HCT116 (cell line): ENCODE measurements at regions of chr11 and their contacts with region 1.

Region 1: DNA sequence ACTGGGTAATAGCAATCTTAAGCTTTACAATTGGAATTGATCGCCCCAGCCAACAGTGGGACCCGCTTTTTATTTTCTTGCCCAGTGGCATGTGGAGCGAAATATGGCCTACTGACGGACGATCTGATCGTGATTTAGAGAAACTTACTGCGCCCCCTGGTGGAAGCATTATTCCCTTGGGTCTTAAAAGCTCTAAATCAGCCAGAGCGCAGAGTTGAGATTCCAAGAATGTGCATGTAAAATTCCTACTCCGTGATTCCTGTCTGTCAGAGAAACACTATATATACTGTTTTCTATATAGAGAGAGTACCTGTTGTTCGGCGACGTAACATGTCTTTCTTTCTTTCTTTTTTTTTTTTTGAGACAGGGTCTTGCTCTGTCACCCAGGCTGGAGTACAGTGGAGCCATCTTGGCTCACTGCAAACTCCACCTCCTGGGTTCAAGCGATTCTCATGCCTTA is 3.7 kb upstream of the DPF2 start:
- DNase-seq: peak; percentile 93
- ATAC-seq: peak; percentile 57
- H3K4me3 ChIP-seq: 0 out of 4 replicates have a peak overlapping the region, but pooled peaks of 1 of the 2 experiments have one; percentile 6
- H3K27ac ChIP-seq: no peak overlapping the region
- H3K4me1 ChIP-seq: peaks cover 9 to 23% of the 10 kb centered on the region in 2 experiments
- H3K27me3 ChIP-seq: no peaks in the 10 kb centered on the region
- CTCF ChIP-seq: peak; percentile 76 to 89 (median 86)
- POLR2A ChIP-seq: peak; percentile 15
- RAD21 ChIP-seq: peak; percentile 80

Region 2: GRCh38 chr11:65102142-65103095 is 227.6 kb before region 1 on chr11:
- CTCF ChIA-PET with region 1: no interaction called
- POLR2A ChIA-PET with region 1: no interaction called
- RAD21 ChIA-PET with region 1: no interaction called
- intact Hi-C with region 1: no loop called
- DNase-seq: no peak
- ATAC-seq: no peak; the same call in 1 of the 2 replicates
- H3K4me3 ChIP-seq: no peak overlapping the region
- H3K27ac ChIP-seq: no peak overlapping the region
- H3K4me1 ChIP-seq: peaks cover 0 to under 1% of the 10 kb centered on the region in 2 experiments; a peak in 1 of 4 replicates
- H3K27me3 ChIP-seq: no peaks in the 10 kb centered on the region
- CTCF ChIP-seq: no peak
- POLR2A ChIP-seq: no peak
- RAD21 ChIP-seq: no peak

Region 3: DNA sequence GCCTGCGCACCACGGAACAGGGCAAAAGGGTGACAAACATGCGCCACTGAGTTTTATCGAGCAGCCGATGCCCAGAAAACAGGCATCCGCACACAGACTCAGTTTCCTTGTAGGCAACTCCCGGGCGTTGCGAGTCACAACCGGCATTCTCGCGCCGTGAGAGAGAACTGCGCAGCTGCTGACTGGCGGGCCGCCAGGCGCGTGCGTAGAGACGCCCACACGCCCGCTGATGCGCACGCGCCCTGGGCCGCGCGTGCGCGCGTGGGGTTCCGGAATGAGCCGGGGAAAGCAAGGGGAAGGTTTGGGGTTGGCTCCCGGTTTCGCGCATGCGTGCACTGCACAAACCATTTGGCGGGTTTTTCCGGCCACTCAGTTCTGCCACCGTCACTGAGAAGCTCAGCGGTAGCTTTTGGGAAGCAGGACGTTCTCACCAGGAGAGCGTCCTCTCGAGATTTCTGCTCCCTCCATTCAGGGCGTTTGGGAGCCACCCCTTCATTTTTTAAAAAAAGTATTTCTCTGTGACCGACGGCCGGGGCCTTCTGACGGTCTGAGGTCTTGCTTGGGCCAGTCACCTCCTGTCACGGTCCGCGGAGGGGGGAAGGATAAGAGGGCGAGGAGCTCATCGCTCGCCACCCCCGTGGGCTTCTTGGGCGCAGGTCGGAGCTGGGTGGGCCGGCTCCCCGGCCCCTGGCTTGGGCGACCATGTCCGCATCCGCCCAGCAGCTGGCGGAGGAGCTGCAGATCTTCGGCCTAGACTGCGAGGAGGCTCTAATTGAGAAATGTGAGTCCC is 68.2 kb before region 1 on chr11 and contains the start of gene POLA2:
- CTCF ChIA-PET with region 1: interaction called, 4 read pairs
- POLR2A ChIA-PET with region 1: interaction called, 10 read pairs
- RAD21 ChIA-PET with region 1: interaction called in 1 of 2 experiments, 5 read pairs
- intact Hi-C with region 1: no loop called
- DNase-seq: peak; percentile 92
- ATAC-seq: peak; percentile 87
- H3K4me3 ChIP-seq: peak within 1 kb of the TSS; percentile 81 to 90
- H3K27ac ChIP-seq: peak within 1 kb of the TSS; percentile 90
- H3K4me1 ChIP-seq: peaks cover 7 to 18% of the 10 kb centered on the region in 2 experiments; a peak in 3 of 4 replicates
- H3K27me3 ChIP-seq: no peaks in the 10 kb centered on the region
- CTCF ChIP-seq: no peak
- POLR2A ChIP-seq: peak; percentile 62
- RAD21 ChIP-seq: no peak
- total RNA-seq, gene POLA2: 20.0 TPM

Region 4: DNA sequence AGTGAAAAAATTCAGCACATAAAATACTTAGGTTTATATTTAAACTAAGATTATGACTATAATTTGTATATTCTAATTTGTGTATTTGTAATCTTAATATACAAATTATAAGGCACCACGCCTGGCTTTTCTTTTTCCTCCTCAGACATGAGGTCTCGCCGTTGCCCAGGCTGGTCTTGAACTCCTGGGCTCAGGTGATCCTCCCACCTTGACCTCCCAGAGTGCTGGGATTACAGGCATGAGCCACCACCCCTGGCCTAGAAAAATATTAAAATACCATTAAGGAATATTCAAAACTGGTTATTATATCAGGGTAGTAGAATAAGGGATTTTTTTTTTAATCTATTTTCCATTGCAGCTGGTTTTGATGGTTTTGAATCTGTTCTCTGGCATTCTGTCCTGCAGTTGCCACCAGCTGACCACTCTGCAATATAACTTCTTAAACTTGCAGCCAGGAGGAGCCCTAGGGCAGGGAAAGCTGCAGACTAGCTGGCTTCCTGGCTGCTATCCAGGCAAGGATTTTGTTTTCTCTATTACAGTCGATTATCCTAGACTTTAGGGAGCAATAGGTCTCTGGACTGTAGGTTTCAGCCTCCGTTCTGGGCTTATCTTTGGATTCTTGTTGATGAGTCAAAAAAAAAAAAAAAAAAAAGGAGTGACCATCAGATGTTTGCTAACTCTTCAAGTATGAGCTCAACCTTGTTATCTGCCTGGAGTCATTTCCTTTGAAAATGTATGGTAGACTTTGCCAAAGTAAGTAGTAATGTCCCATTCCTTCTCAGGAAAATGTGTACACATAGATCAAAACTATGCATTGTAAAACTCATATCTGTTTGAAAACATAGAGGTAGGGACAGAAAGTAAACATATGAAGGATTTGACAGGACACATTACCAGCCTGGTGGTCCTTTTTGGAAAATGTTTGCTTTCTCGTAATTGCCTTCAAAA is 55.0 kb before region 1 on chr11:
- CTCF ChIA-PET with region 1: interaction called, 202 read pairs
- POLR2A ChIA-PET with region 1: interaction called, 16 read pairs
- RAD21 ChIA-PET with region 1: interaction called, 3 to 13 read pairs
- intact Hi-C with region 1: loop called (anchors 1 kb)
- DNase-seq: peak; percentile 68
- ATAC-seq: peak; percentile 71
- H3K4me3 ChIP-seq: no peak overlapping the region
- H3K27ac ChIP-seq: no peak overlapping the region
- H3K4me1 ChIP-seq: peaks cover 20 to 38% of the 10 kb centered on the region in 2 experiments
- H3K27me3 ChIP-seq: no peaks in the 10 kb centered on the region
- CTCF ChIP-seq: peak; percentile 67 to 97 (median 82); a peak in 5 of 6 replicates
- POLR2A ChIP-seq: no peak
- RAD21 ChIP-seq: peak; percentile 99

Region 5: GRCh38 chr11:65314501-65315203 is 15.3 kb before region 1 on chr11 and contains the start of gene CDC42EP2:
- CTCF ChIA-PET with region 1: interaction called, 103 read pairs
- POLR2A ChIA-PET with region 1: interaction called, 20 read pairs
- RAD21 ChIA-PET with region 1: interaction called, 3 read pairs
- intact Hi-C with region 1: no loop called
- DNase-seq: peak; percentile 44
- ATAC-seq: peak; percentile 82
- H3K4me3 ChIP-seq: peak within 1 kb of the TSS; percentile 84 to 85
- H3K27ac ChIP-seq: peak within 1 kb of the TSS; percentile 83
- H3K4me1 ChIP-seq: peaks cover 31 to 61% of the 10 kb centered on the region in 2 experiments
- H3K27me3 ChIP-seq: no peaks in the 10 kb centered on the region
- CTCF ChIP-seq: no peak
- POLR2A ChIP-seq: peak; percentile 62
- RAD21 ChIP-seq: no peak
- total RNA-seq, gene CDC42EP2: 15.4 TPM

Region 6: GRCh38 chr11:65354265-65355012 is 24.5 kb after region 1 on chr11 and contains the start of gene TIGD3:
- CTCF ChIA-PET with region 1: interaction called, 17 read pairs
- POLR2A ChIA-PET with region 1: interaction called, 3 read pairs
- RAD21 ChIA-PET with region 1: no interaction called
- intact Hi-C with region 1: no loop called
- DNase-seq: peak; percentile 81
- ATAC-seq: peak; percentile 96
- H3K4me3 ChIP-seq: peak within 1 kb of the TSS; percentile 44 to 60
- H3K27ac ChIP-seq: peak within 1 kb of the TSS; percentile 63
- H3K4me1 ChIP-seq: peaks cover 3 to 20% of the 10 kb centered on the region in 2 experiments; a peak in 2 of 4 replicates
- H3K27me3 ChIP-seq: no peaks in the 10 kb centered on the region
- CTCF ChIP-seq: no peak
- POLR2A ChIP-seq: peak; percentile 69
- RAD21 ChIP-seq: no peak
- total RNA-seq, gene TIGD3: 2.4 TPM